B cell (primary cell): ENCODE measurements at regions of chr9 and their contacts with region 1.

Region 1: GRCh38 chr9:89400403-89401116 is 82.3 kb downstream of the SECISBP2 start:
- DNase-seq: peak; percentile 78
- ATAC-seq: peak; percentile 83
- H3K4me3 ChIP-seq: peak overlapping the region in 4 of 5 experiments; percentile 21 to 44 (median 36)
- H3K4me3 Mint-ChIP-seq: peak overlapping the region; percentile 78
- H3K27ac ChIP-seq: peak overlapping the region; percentile 69 to 76
- H3K27ac Mint-ChIP-seq: peak overlapping the region; percentile 93
- H3K4me1 ChIP-seq: peaks cover 43 to 56% of the 10 kb centered on the region in 2 donors
- H3K4me1 Mint-ChIP-seq: peaks cover 56% of the 10 kb centered on the region
- H3K27me3 ChIP-seq: no peaks in the 10 kb centered on the region
- H3K27me3 Mint-ChIP-seq: no peaks in the 10 kb centered on the region
- CTCF ChIP-seq: no peak

Region 2: GRCh38 chr9:89318123-89319014 is 82.2 kb before region 1 on chr9 and contains the start of gene SECISBP2:
- CTCF ChIA-PET with region 1: interaction called, 3 read pairs
- POLR2A ChIA-PET with region 1: no interaction called
- intact Hi-C with region 1: loop called (anchors 2 kb)
- DNase-seq: peak; percentile 97
- ATAC-seq: peak; percentile 91
- H3K4me3 ChIP-seq: peak within 1 kb of the TSS; percentile 56 to 93 (median 81)
- H3K4me3 Mint-ChIP-seq: peak within 1 kb of the TSS; percentile 89
- H3K27ac ChIP-seq: peak within 1 kb of the TSS; percentile 96 to 99
- H3K27ac Mint-ChIP-seq: peak within 1 kb of the TSS; percentile 93
- H3K4me1 ChIP-seq: peaks cover 20 to 21% of the 10 kb centered on the region in 2 donors
- H3K4me1 Mint-ChIP-seq: peaks cover 65% of the 10 kb centered on the region
- H3K27me3 ChIP-seq: no peaks in the 10 kb centered on the region
- H3K27me3 Mint-ChIP-seq: no peaks in the 10 kb centered on the region
- CTCF ChIP-seq: peak; percentile 82
- total RNA-seq, gene SECISBP2: 124 and 130 TPM in 2 replicates

Region 3: GRCh38 chr9:89418882-89419640 is 18.5 kb after region 1 on chr9:
- CTCF ChIA-PET with region 1: interaction called, 11 read pairs
- POLR2A ChIA-PET with region 1: interaction called, 19 read pairs
- intact Hi-C with region 1: loop called (anchors 1 kb)
- DNase-seq: peak; percentile 70
- ATAC-seq: peak; percentile 86
- H3K4me3 ChIP-seq: peak overlapping the region in 4 of 5 experiments; percentile 1 to 42 (median 8)
- H3K4me3 Mint-ChIP-seq: peak overlapping the region; percentile 85
- H3K27ac ChIP-seq: peak overlapping the region; percentile 64 to 65
- H3K27ac Mint-ChIP-seq: peak overlapping the region; percentile 92
- H3K4me1 ChIP-seq: peaks cover 44 to 56% of the 10 kb centered on the region in 2 donors
- H3K4me1 Mint-ChIP-seq: peaks cover 68% of the 10 kb centered on the region
- H3K27me3 ChIP-seq: no peaks in the 10 kb centered on the region
- H3K27me3 Mint-ChIP-seq: no peaks in the 10 kb centered on the region
- CTCF ChIP-seq: no peak

Region 4: DNA sequence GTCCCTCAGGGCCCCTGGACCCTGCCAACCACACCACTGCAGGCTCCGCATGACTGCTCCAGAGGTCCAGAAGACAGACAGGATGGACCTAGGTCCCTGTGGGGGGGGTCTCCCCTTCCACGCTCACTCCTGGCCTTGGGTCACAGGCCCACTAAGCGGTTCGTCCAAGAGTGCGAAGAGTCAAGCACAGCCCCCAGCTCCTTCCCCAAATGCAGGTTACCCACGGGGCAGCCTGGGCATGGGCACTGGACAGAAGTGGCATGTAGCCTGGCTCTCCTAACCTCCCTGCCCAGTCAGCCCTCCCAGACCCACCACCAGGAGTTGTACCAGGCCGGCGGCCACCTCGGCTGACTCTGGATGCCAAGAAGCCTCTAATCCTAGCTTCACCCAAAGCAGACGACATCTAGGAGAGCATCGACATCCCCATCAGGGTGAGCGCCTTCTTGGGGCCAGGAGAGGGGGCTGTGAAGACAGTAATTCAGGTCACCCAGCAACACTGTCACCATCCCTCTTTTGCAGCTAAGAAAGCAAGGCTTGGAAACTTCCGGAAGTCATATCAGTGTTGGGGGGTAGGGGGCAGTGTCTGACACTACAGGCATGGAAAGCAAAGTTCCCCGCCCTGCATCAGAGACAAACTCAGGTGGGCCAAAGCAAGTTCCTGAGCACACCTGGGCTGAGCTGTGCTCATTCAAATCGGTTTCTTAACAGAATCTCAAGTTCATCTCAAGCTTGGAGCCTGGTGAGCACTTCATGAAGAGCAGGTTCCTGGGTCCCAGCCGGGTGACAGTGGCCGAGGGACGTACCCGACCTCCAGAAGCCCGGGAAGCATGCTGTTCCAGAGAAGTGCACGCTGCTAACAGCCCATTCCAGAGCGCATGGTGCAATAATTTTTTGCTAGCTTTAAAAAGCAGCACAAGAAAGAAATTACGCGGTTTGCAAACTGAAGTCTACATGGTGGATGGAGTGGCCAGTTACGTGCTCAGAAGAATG is 28.6 kb after region 1 on chr9:
- CTCF ChIA-PET with region 1: interaction called, 43 read pairs
- POLR2A ChIA-PET with region 1: interaction called, 6 read pairs
- intact Hi-C with region 1: loop called (anchors 1 kb)
- DNase-seq: peak; percentile 70
- ATAC-seq: peak; percentile 29
- H3K4me3 ChIP-seq: no peak overlapping the region
- H3K4me3 Mint-ChIP-seq: no peak overlapping the region
- H3K27ac ChIP-seq: no peak overlapping the region
- H3K27ac Mint-ChIP-seq: peak overlapping the region; percentile 59
- H3K4me1 ChIP-seq: peaks cover 78 to 98% of the 10 kb centered on the region in 2 donors
- H3K4me1 Mint-ChIP-seq: peaks cover 86% of the 10 kb centered on the region
- H3K27me3 ChIP-seq: no peaks in the 10 kb centered on the region
- H3K27me3 Mint-ChIP-seq: no peaks in the 10 kb centered on the region
- CTCF ChIP-seq: peak; percentile 68

Region 5: GRCh38 chr9:89437000-89437631 is 36.6 kb after region 1 on chr9:
- CTCF ChIA-PET with region 1: interaction called, 43 read pairs
- POLR2A ChIA-PET with region 1: interaction called, 4 read pairs
- intact Hi-C with region 1: loop called (anchors 2 kb)
- DNase-seq: peak; percentile 67
- ATAC-seq: peak; percentile 83
- H3K4me3 ChIP-seq: no peak overlapping the region
- H3K4me3 Mint-ChIP-seq: peak overlapping the region; percentile 37
- H3K27ac ChIP-seq: peak overlapping the region in 1 of 2 donors; percentile 23
- H3K27ac Mint-ChIP-seq: peak overlapping the region; percentile 78
- H3K4me1 ChIP-seq: peaks cover 78 to 96% of the 10 kb centered on the region in 2 donors
- H3K4me1 Mint-ChIP-seq: peaks cover 87% of the 10 kb centered on the region
- H3K27me3 ChIP-seq: no peaks in the 10 kb centered on the region
- H3K27me3 Mint-ChIP-seq: no peaks in the 10 kb centered on the region
- CTCF ChIP-seq: no peak

Region 6: DNA sequence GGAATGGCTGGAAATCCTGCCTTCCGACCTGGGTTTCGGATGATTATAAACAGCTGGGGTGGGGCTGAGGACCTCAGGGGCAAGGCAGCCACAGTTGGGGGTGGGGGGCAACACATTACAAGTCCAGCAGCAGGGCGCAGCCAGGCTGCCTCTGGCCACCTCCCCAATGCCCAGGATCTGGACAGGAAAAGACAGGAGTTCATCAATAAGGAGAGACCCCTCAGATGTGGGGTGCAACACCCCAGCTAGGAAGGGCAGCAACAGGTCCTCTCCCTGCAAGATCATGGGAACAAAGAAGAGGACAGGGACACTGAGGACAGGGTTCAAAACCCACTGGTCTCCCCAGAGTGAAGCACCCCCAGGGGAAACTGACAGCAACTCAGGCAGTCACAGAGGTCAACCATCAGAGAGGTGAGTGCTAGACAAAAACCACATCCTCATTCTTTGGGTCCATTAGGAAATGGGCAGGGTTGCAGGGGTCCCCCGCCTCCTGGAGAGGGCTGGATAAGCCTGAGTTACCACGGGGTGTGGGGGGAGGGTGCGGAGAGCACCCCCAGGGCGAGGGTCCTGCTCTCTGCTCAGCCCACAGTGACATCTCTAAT is 63.8 kb after region 1 on chr9:
- CTCF ChIA-PET with region 1: no interaction called
- POLR2A ChIA-PET with region 1: interaction called, 5 read pairs
- intact Hi-C with region 1: loop called (anchors 1 kb)
- DNase-seq: peak; percentile 32
- ATAC-seq: peak; percentile 37
- H3K4me3 ChIP-seq: peak overlapping the region; percentile 8 to 58 (median 20)
- H3K4me3 Mint-ChIP-seq: peak overlapping the region; percentile 76
- H3K27ac ChIP-seq: peak overlapping the region; percentile 67 to 78
- H3K27ac Mint-ChIP-seq: peak overlapping the region; percentile 78
- H3K4me1 ChIP-seq: peaks cover 72 to 75% of the 10 kb centered on the region in 2 donors
- H3K4me1 Mint-ChIP-seq: peaks cover 90% of the 10 kb centered on the region
- H3K27me3 ChIP-seq: no peaks in the 10 kb centered on the region
- H3K27me3 Mint-ChIP-seq: no peaks in the 10 kb centered on the region
- CTCF ChIP-seq: no peak

Region 7: DNA sequence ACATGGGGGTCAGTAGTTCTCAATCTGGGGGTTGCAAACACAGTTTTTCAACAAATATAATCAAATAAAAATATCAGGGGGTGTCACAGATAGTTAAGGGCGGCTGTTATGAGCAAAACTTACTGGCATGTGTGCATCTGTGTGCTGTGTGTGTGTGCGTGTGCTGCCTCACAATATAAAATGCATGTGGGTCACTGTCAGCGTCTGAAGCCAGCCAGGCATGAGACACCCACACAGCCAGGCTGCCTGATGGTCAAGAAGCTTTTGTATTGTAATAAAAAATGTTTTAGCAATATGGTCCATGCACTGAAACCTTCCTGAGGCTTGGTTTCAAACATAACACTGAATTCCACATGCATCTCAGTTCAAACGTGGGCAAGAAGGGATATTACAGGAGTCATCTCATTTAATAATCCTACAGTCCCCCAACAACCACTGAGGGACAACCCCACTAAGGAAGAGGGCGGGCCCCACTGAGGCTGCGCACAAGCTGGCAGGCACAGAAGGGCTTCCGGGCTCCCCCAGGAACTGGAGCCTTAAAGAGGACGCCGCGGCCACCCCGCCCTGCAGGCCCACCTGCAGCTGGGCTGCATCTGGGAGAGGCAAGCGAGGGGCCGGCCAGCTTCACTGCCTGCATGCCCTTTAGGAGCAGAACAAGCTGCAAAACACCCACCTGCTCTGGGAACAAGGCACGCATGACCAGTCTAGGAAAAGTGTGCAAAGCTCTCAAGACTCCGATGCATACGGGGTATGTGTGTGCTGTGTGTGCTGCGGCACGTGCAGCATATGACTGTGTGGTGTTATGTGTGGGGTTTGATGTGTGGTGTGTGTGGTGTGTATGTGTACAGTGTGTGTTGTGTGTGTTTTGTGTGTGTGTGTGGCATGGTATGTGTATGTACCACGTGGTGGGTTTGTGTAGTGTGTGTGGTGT is 83.3 kb after region 1 on chr9:
- CTCF ChIA-PET with region 1: interaction called, 4 read pairs
- POLR2A ChIA-PET with region 1: no interaction called
- intact Hi-C with region 1: loop called (anchors 1 kb)
- DNase-seq: peak; percentile 73
- ATAC-seq: peak; percentile 76
- H3K4me3 ChIP-seq: peak overlapping the region; percentile 39 to 86 (median 58)
- H3K4me3 Mint-ChIP-seq: peak overlapping the region; percentile 91
- H3K27ac ChIP-seq: peak overlapping the region; percentile 48 to 84
- H3K27ac Mint-ChIP-seq: peak overlapping the region; percentile 93
- H3K4me1 ChIP-seq: peaks cover 47 to 50% of the 10 kb centered on the region in 2 donors
- H3K4me1 Mint-ChIP-seq: peaks cover 81% of the 10 kb centered on the region
- H3K27me3 ChIP-seq: no peaks in the 10 kb centered on the region
- H3K27me3 Mint-ChIP-seq: no peaks in the 10 kb centered on the region
- CTCF ChIP-seq: no peak

Region 8: GRCh38 chr9:89515416-89515815 is 114.9 kb after region 1 on chr9:
- CTCF ChIA-PET with region 1: no interaction called
- POLR2A ChIA-PET with region 1: no interaction called
- intact Hi-C with region 1: no loop called
- DNase-seq: no peak
- ATAC-seq: no peak
- H3K4me3 ChIP-seq: no peak overlapping the region
- H3K4me3 Mint-ChIP-seq: no peak overlapping the region
- H3K27ac ChIP-seq: no peak overlapping the region
- H3K27ac Mint-ChIP-seq: no peak overlapping the region
- H3K4me1 ChIP-seq: peaks cover 34 to 38% of the 10 kb centered on the region in 2 donors
- H3K4me1 Mint-ChIP-seq: peaks cover 44% of the 10 kb centered on the region
- H3K27me3 ChIP-seq: no peaks in the 10 kb centered on the region
- H3K27me3 Mint-ChIP-seq: no peaks in the 10 kb centered on the region
- CTCF ChIP-seq: no peak